ENCODE measurements at regions of chr10 and their contacts with region 1.

Region 1: GRCh38 chr10:79374312-79375191 is 27.3 kb downstream of the PPIF start:
- DNase-seq: peak; percentile 76 to 89 (median 87)
- H3K4me3 ChIP-seq: no peak overlapping the region
- H3K27ac ChIP-seq: no peak overlapping the region
- H3K4me1 ChIP-seq: peaks cover 11% of the 10 kb centered on the region
- H3K27me3 ChIP-seq: no peaks in the 10 kb centered on the region
- CTCF ChIP-seq: peak; percentile 92 to 96 (median 94)
- EP300 ChIP-seq: no peak
- POLR2A ChIP-seq: no peak

Region 2: DNA sequence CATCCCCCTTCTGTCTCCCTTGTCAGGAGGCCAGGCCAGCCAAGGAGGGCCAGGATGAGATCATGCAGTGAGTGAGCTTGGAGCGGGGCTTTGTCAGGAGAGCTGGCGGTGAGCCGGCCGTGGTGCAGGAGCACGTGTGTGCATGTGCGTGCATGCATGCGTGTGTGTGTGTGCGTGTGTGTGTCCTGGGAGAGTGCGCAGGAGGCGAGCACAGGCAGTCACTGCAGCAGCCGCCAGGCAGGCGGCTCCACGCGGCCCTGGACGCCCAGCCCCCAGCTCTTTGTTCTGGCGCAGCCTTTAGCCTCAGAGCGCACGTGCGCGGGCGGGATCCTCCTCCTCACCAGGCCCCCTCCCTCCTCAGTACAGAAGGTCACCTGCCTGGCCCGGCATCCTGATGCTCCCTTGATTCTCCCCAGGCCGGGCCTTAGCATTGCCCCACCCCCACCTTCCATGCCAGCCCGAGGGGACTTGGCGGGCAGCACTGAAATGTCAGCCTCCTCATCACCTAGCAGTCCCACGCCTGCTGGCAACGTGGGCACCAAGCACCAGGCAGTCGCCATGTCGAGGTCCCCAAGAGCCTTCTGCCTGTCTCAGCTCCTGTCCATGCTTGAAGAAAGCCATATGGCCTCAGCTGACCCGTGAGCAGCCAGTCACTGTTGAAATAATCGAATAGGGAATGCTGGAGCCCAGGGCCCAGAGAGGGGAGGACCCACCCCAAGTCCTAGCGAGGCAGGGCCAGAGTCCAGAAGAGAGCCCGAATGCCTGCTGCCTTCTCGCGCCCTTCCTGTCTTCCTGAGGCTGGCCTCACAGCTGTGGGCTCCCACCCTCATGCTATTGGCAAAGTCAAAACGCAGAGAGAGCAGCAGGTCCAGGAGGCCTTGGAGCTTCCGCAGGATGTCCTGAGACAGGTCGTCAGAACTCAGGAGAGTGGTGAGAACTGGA is 153.2 kb before region 1 on chr10:
- intact Hi-C with region 1: no loop called
- DNase-seq: peak; percentile 83 to 98 (median 95)
- H3K4me3 ChIP-seq: no peak overlapping the region
- H3K27ac ChIP-seq: peak overlapping the region; percentile 22 to 74
- H3K4me1 ChIP-seq: peaks cover 44% of the 10 kb centered on the region
- H3K27me3 ChIP-seq: no peaks in the 10 kb centered on the region
- CTCF ChIP-seq: peak in 1 of 3 donors; percentile 40
- EP300 ChIP-seq: no peak
- POLR2A ChIP-seq: no peak

Region 3: DNA sequence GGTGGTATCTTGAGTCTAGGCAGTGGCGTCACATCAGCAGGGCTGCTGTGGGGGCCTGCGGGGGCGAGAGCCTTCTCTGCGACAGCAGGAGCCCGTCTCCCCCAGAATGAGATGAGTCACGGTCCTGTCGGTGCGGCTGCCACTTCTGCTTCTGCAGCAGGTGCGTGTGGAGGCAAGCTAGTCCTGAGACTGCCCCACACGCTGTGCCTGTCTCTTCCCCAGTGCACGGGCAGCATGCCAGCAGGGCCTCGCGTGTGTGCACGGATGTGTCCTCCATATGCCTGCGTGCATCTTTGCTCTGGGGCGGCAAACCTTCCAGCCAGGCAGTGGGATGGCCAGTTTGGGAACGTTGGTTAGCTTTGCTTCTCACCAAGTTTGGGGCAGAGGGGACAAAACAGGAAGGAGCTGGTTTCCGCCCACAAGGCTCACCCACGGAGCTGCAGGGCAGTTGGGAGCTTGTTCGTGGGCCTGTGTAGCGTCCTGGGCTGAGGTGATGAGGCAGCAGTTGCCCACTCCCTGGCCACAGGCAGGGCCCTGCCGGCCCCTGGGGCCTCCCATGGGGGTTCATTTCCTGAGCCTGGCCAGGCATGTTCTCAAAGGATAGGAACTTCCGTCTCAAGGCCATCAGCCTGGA is 88.1 kb before region 1 on chr10:
- intact Hi-C with region 1: no loop called
- DNase-seq: peak; percentile 68 to 82 (median 68)
- H3K4me3 ChIP-seq: no peak overlapping the region
- H3K27ac ChIP-seq: peak overlapping the region; percentile 52 to 53
- H3K4me1 ChIP-seq: peaks cover 19% of the 10 kb centered on the region
- H3K27me3 ChIP-seq: no peaks in the 10 kb centered on the region
- CTCF ChIP-seq: no peak
- EP300 ChIP-seq: no peak
- POLR2A ChIP-seq: no peak

Region 4: DNA sequence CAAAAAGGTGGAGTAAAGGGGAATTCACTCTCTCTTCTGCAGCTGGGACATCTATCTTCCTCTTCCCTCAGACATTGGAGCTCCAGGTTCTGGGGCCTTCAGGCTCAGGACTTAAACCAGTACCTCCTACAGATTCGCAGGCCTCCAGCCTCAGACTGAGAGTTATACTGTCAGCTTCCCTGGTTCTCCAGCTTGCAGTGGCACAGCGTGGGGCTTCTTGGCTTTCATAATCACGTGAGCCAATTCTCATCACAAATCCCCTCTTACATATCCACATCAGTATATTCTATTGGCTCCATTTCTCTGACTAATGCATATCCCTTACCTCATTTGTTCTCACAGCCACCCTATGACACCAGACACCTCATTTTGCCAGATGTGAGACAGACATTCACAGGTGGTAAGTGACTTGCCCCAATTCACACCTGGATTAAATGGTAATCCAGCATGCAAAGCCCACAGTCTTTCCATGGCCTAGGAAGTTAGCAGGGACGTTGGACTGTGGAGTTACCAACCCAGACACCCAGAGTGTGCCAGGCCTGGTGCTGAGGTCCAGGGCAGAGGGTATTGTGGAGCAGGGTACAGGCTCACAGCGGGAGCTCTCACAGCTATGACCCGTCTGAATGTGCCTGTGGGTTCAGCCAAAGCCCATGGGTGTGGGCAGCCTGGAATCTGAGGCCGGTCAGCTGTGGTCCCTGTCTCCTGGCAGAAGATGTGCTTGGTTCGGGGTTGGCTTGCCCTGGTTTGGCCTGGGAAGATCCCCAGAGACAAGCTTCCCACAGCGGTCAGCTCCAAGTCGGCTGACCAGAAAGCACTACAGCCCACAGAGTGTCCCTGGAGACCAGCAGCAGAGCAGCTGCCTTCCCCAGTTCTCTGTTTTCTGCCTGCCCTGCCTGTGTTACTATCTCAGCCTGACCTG is 89.3 kb after region 1 on chr10:
- intact Hi-C with region 1: loop called in 1 of 4 experiments (anchors 5 kb)
- DNase-seq: no peak
- H3K4me3 ChIP-seq: no peak overlapping the region
- H3K27ac ChIP-seq: no peak overlapping the region
- H3K4me1 ChIP-seq: peaks cover 3% of the 10 kb centered on the region
- H3K27me3 ChIP-seq: no peaks in the 10 kb centered on the region
- CTCF ChIP-seq: no peak
- EP300 ChIP-seq: no peak
- POLR2A ChIP-seq: no peak

Region 5: GRCh38 chr10:79475119-79475653 is 100.6 kb after region 1 on chr10:
- intact Hi-C with region 1: no loop called
- DNase-seq: no peak
- H3K4me3 ChIP-seq: no peak overlapping the region
- H3K27ac ChIP-seq: no peak overlapping the region
- H3K4me1 ChIP-seq: no peaks in the 10 kb centered on the region
- H3K27me3 ChIP-seq: no peaks in the 10 kb centered on the region
- CTCF ChIP-seq: no peak
- EP300 ChIP-seq: no peak
- POLR2A ChIP-seq: no peak

Region 6: GRCh38 chr10:79490400-79491142 is 116.0 kb after region 1 on chr10:
- intact Hi-C with region 1: loop called in 2 of 4 experiments (anchors 5 to 10 kb)
- DNase-seq: peak in 3 of 5 donors; percentile 56 to 75 (median 64)
- H3K4me3 ChIP-seq: no peak overlapping the region
- H3K27ac ChIP-seq: no peak overlapping the region
- H3K4me1 ChIP-seq: peaks cover 7% of the 10 kb centered on the region
- H3K27me3 ChIP-seq: no peaks in the 10 kb centered on the region
- CTCF ChIP-seq: no peak
- EP300 ChIP-seq: no peak
- POLR2A ChIP-seq: no peak

Region 7: GRCh38 chr10:79496896-79497295 is 122.3 kb after region 1 on chr10:
- intact Hi-C with region 1: loop called in 3 of 4 experiments (anchors 2 to 10 kb)
- DNase-seq: no peak
- H3K4me3 ChIP-seq: no peak overlapping the region
- H3K27ac ChIP-seq: no peak overlapping the region
- H3K4me1 ChIP-seq: no peaks in the 10 kb centered on the region
- H3K27me3 ChIP-seq: no peaks in the 10 kb centered on the region
- CTCF ChIP-seq: no peak
- EP300 ChIP-seq: no peak
- POLR2A ChIP-seq: no peak

Region 8: DNA sequence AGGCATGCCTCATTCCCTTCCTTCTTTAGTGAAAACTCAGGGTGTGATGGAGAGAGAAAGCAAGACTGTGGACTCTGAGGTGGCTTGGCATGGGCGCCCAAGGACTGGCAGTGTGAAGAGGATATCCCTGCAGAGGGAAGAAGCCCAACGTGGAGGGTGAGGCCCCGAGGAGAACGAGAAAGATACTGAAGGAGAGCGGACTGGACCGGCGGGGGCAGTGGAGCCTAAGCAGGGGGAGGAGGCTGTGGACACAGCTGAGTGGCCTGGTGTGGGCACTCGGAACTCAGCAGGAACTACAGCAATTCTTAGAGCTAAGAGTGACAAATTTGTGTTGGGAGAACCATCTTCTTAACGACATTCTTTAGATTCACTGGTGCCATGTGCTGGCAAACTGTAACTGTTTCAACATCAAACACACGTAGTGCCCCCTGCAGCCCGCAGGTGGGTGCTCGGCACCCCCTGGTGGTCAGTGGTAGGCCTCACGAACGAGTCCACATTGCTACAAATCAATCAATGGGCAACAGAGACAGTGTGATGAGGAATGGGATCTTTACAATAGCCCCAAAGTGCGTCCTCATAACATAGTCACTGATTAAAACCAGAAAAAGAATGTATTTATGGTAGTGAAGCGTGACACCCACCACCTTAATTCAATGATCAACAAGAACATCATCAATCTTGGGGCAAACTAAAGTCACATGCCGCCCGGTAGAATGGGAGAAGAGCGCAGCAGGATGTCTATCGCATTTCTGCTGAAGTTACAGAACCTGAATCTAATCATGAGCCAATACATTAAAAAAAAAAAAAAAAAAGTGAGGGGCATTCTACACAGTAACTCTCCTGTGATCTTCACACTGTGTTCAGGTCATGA is 234.2 kb after region 1 on chr10:
- intact Hi-C with region 1: loop called in 1 of 4 experiments (anchors 5 kb)
- DNase-seq: no peak
- H3K4me3 ChIP-seq: no peak overlapping the region
- H3K27ac ChIP-seq: no peak overlapping the region
- H3K4me1 ChIP-seq: no peaks in the 10 kb centered on the region
- H3K27me3 ChIP-seq: no peaks in the 10 kb centered on the region
- CTCF ChIP-seq: peak in 1 of 3 donors; percentile 18
- EP300 ChIP-seq: no peak
- POLR2A ChIP-seq: no peak

Measured in ovary (tissue), 10 donors.